GM12878 (cell line): ENCODE measurements at regions of chr11 and their contacts with region 1.

Region 1: GRCh38 chr11:112219476-112220232 is 6.6 kb upstream of the PTS start:
- DNase-seq: peak; percentile 56
- ATAC-seq: peak; percentile 98
- H3K4me3 ChIP-seq: no peak overlapping the region
- H3K27ac ChIP-seq: no peak overlapping the region
- H3K4me1 ChIP-seq: no peaks in the 10 kb centered on the region
- H3K27me3 ChIP-seq: no peaks in the 10 kb centered on the region
- CTCF ChIP-seq: peak; percentile 63 to 88 (median 68); a peak in 4 of 6 replicates
- EP300 ChIP-seq: no peak
- POLR2A ChIP-seq: no peak
- RAD21 ChIP-seq: peak; percentile 80

Region 2: GRCh38 chr11:112270551-112271174 is 51.0 kb after region 1 on chr11:
- CTCF ChIA-PET with region 1: interaction called, 14 read pairs
- POLR2A ChIA-PET with region 1: no interaction called
- RAD21 ChIA-PET with region 1: no interaction called
- SMC1A ChIA-PET with region 1: interaction called, 5 read pairs
- in situ Hi-C with region 1: loop called (anchors 5 kb)
- intact Hi-C with region 1: no loop called
- DNase-seq: no peak
- ATAC-seq: no peak
- H3K4me3 ChIP-seq: no peak overlapping the region
- H3K27ac ChIP-seq: no peak overlapping the region
- H3K4me1 ChIP-seq: no peaks in the 10 kb centered on the region
- H3K27me3 ChIP-seq: no peaks in the 10 kb centered on the region
- CTCF ChIP-seq: no peak
- EP300 ChIP-seq: no peak
- POLR2A ChIP-seq: no peak
- RAD21 ChIP-seq: no peak

Region 3: GRCh38 chr11:112555491-112556364 is 336.1 kb after region 1 on chr11:
- CTCF ChIA-PET with region 1: interaction called, 3 read pairs
- POLR2A ChIA-PET with region 1: no interaction called
- RAD21 ChIA-PET with region 1: no interaction called
- SMC1A ChIA-PET with region 1: no interaction called
- in situ Hi-C with region 1: no loop called
- intact Hi-C with region 1: loop called (anchors 5 kb)
- DNase-seq: no peak
- ATAC-seq: peak; percentile 74
- H3K4me3 ChIP-seq: no peak overlapping the region
- H3K27ac ChIP-seq: no peak overlapping the region
- H3K4me1 ChIP-seq: no peaks in the 10 kb centered on the region
- H3K27me3 ChIP-seq: no peaks in the 10 kb centered on the region; a peak in 1 of 4 replicates
- CTCF ChIP-seq: peak; percentile 50 to 82 (median 76)
- EP300 ChIP-seq: no peak
- POLR2A ChIP-seq: no peak
- RAD21 ChIP-seq: peak; percentile 60

Region 4: DNA sequence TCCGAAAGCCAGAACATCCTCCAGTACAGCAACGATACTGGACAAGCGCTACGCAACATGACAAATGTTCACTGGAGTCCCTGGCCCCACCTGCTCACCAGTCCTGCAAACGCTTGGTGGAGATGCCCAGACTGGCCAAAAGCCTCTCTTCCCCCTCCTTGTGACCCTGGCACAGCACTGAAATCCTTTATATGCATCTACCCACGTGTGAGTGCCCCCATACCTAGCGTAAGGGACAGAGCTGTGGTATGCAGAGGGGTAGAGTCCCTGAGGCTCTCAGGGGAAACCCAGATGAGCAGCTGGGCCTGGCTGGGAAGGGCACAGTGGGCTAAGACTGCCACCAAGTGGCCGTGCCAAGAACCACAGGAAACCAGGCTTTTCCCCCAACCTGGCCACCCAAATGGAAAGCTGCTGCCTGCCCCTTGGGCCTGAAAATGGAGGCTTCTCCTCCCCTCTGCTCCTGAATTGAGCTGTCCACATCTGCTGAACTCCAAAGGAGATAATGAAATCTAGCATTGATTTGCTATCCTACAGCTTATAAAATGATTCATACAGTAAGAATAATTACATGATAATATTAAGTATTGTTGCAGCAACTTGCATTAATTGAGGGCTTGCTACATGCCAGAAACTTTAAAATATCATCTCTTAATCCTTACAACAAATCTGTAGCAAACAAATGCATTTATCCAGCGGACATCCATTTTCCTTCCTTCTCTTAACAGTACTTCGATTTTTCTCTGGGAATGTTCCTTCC is 1070.0 kb after region 1 on chr11:
- CTCF ChIA-PET with region 1: interaction called, 6 read pairs
- POLR2A ChIA-PET with region 1: no interaction called
- RAD21 ChIA-PET with region 1: interaction called, 4 read pairs
- SMC1A ChIA-PET with region 1: interaction called, 5 read pairs
- in situ Hi-C with region 1: loop called (anchors 10 kb)
- intact Hi-C with region 1: loop called (anchors 2 kb)
- DNase-seq: peak; percentile 33
- ATAC-seq: peak; percentile 99
- H3K4me3 ChIP-seq: no peak overlapping the region
- H3K27ac ChIP-seq: no peak overlapping the region
- H3K4me1 ChIP-seq: no peaks in the 10 kb centered on the region
- H3K27me3 ChIP-seq: 0 out of 4 replicates have a peak, but pooled peaks cover 0 to 2% of the 10 kb centered on the region in 2 experiments
- CTCF ChIP-seq: peak; percentile 89 to 98 (median 97)
- EP300 ChIP-seq: no peak
- POLR2A ChIP-seq: no peak
- RAD21 ChIP-seq: peak; percentile 96